OCI-LY7 (cell line): ENCODE measurements at regions of chr6 and their contacts with region 1.

Region 1: GRCh38 chr6:2162089-2162465 is 83.3 kb downstream of the GMDS start:
- DNase-seq: no peak
- H3K4me3 ChIP-seq: no peak overlapping the region
- H3K27ac ChIP-seq: no peak overlapping the region
- H3K4me1 ChIP-seq: no peaks in the 10 kb centered on the region
- CTCF ChIP-seq: no peak

Region 2: DNA sequence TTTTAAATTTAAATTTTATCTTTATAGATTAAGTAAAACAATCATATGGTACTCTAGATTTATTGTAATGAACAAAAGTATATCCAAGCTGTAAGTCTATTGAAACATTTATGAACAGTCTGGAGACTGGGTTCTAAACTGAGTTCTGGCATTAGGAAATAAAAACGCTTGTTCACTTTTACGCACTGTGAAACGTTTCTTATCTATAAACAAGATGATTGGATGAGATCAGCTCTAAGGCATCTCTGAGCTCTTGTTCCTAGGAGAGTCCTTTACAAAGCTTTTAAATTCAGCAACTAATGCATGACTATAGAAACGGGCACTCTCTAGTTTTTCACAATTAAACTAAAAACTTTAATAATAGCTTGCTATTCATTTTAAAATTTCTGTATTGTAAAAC is 1512.0 kb before region 1 on chr6:
- CTCF ChIA-PET with region 1: no interaction called
- POLR2A ChIA-PET with region 1: interaction called, 10 read pairs
- intact Hi-C with region 1: no loop called
- DNase-seq: no peak
- H3K4me3 ChIP-seq: no peak overlapping the region
- H3K27ac ChIP-seq: no peak overlapping the region
- H3K4me1 ChIP-seq: no peaks in the 10 kb centered on the region
- CTCF ChIP-seq: no peak

Region 3: GRCh38 chr6:2237001-2237400 is 74.9 kb after region 1 on chr6:
- CTCF ChIA-PET with region 1: no interaction called
- POLR2A ChIA-PET with region 1: no interaction called
- intact Hi-C with region 1: no loop called
- DNase-seq: no peak
- H3K4me3 ChIP-seq: no peak overlapping the region
- H3K27ac ChIP-seq: no peak overlapping the region
- H3K4me1 ChIP-seq: no peaks in the 10 kb centered on the region
- CTCF ChIP-seq: no peak